CD14-positive monocyte (primary cell): ENCODE measurements at regions of chr13 and their contacts with region 1.

Region 1: DNA sequence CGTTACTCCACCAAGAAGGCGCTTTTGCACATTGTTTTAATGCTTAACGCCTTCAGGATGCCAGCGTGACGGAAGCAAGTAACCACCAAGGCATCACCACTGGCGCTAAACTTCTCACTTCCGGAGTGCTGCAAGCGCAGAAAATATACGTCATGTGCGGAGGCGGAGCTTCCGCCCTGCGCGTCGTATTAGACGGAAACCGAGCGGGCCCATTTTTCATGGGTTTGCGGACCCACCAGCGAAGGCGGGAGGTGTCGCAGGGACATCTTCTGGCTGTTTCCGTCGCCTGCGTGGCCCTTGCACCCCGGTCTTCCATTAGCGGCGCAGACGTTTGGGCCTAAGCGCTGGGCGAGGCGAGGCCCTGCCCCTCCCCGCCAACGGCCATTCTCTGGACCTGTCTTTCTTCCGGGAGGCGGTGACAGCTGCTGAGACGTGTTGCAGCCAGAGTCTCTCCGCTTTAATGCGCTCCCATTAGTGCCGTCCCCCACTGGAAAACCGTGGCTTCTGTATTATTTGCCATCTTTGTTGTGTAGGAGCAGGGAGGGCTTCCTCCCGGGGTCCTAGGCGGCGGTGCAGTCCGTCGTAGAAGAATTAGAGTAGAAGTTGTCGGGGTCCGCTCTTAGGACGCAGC is at the start of gene ERCC5:
- DNase-seq: peak; percentile 94 to 97 (median 95)
- H3K4me3 ChIP-seq: peak within 1 kb of the TSS; percentile 72 to 97 (median 91)
- H3K4me3 Mint-ChIP-seq: peak within 1 kb of the TSS; percentile 92 to 93
- H3K27ac ChIP-seq: peak within 1 kb of the TSS; percentile 97 to 98
- H3K27ac Mint-ChIP-seq: peak within 1 kb of the TSS; percentile 96 to 99 (median 98)
- H3K4me1 ChIP-seq: peaks cover 15 to 22% of the 10 kb centered on the region in 2 donors
- H3K4me1 Mint-ChIP-seq: peaks cover 21% of the 10 kb centered on the region
- H3K27me3 ChIP-seq: no peaks in the 10 kb centered on the region
- H3K27me3 Mint-ChIP-seq: peaks cover 0 to 3% (median 0%) of the 10 kb centered on the region in 3 donors
- CTCF ChIP-seq: no peak
- polyA plus RNA-seq, gene ERCC5: 15.2 to 34.2 (median 22.1) TPM

Region 2: GRCh38 chr13:102773441-102774215 is 72.1 kb before region 1 on chr13 and contains the start of gene TEX30:
- intact Hi-C with region 1: loop called in 1 of 2 experiments (anchors 5 kb)
- DNase-seq: peak; percentile 78 to 83 (median 82)
- H3K4me3 ChIP-seq: peak within 1 kb of the TSS; percentile 61 to 81 (median 78)
- H3K4me3 Mint-ChIP-seq: peak within 1 kb of the TSS; percentile 97
- H3K27ac ChIP-seq: peak within 1 kb of the TSS; percentile 27 to 69
- H3K27ac Mint-ChIP-seq: peak within 1 kb of the TSS; percentile 57 to 93 (median 89)
- H3K4me1 ChIP-seq: peaks cover 25 to 29% of the 10 kb centered on the region in 2 donors
- H3K4me1 Mint-ChIP-seq: peaks cover 34% of the 10 kb centered on the region
- H3K27me3 ChIP-seq: no peaks in the 10 kb centered on the region
- H3K27me3 Mint-ChIP-seq: peaks cover 0 to 5% (median 5%) of the 10 kb centered on the region in 3 donors
- CTCF ChIP-seq: no peak
- polyA plus RNA-seq, gene TEX30: 2.7 to 11.3 (median 10.9) TPM